Endothelial cell of umbilical vein (primary cell): ENCODE measurements at regions of chr5 and their contacts with region 1.

Region 1: GRCh38 chr5:176660860-176661641 is 13.8 kb downstream of the TSPAN17 start:
- DNase-seq: peak; percentile 69
- H3K4me3 ChIP-seq: no peak overlapping the region
- H3K27ac ChIP-seq: no peak overlapping the region
- H3K4me1 ChIP-seq: no peaks in the 10 kb centered on the region
- H3K27me3 ChIP-seq: peaks cover 0 to 10% of the 10 kb centered on the region in 2 experiments
- CTCF ChIP-seq: peak; percentile 91 to 100
- POLR2A ChIP-seq: no peak

Region 2: DNA sequence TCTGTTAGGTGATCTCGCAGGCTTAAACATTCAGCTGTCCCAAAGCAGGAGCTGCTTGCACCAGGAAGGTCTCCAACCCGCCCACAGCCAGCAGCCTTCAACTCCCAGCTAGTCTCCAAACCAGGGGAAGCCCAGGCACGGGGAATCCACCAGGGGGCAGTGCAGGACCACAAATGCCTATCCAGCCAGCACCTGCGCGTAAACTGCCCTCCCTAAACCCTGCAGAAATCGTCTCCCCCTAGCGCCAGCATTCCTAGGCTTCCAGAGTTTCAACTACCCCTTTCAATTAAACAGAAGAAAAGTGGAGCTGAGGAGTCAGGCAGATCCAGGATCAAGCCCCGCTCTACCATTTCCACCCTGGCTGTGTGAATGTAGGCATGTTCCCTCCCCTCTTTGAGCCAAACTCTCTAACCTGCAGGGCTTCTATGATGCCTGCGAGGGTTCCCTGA is 931.2 kb before region 1 on chr5:
- CTCF ChIA-PET with region 1: interaction called, 10 read pairs
- POLR2A ChIA-PET with region 1: no interaction called
- dilution Hi-C with region 1: no loop called
- intact Hi-C with region 1: loop called (anchors 2 kb)
- DNase-seq: peak; percentile 81
- H3K4me3 ChIP-seq: no peak overlapping the region
- H3K27ac ChIP-seq: no peak overlapping the region
- H3K4me1 ChIP-seq: no peaks in the 10 kb centered on the region
- H3K27me3 ChIP-seq: no peaks in the 10 kb centered on the region
- CTCF ChIP-seq: peak; percentile 90 to 94
- POLR2A ChIP-seq: no peak

Region 3: GRCh38 chr5:176132471-176133288 is 528.4 kb before region 1 on chr5:
- CTCF ChIA-PET with region 1: no interaction called
- POLR2A ChIA-PET with region 1: no interaction called
- dilution Hi-C with region 1: no loop called
- intact Hi-C with region 1: no loop called
- DNase-seq: no peak
- H3K4me3 ChIP-seq: no peak overlapping the region
- H3K27ac ChIP-seq: no peak overlapping the region
- H3K4me1 ChIP-seq: no peaks in the 10 kb centered on the region
- H3K27me3 ChIP-seq: peaks cover 0 to 4% of the 10 kb centered on the region in 2 experiments
- CTCF ChIP-seq: no peak
- POLR2A ChIP-seq: no peak

Region 4: GRCh38 chr5:176671890-176672747 is 11.1 kb after region 1 on chr5:
- CTCF ChIA-PET with region 1: interaction called, 41 read pairs
- POLR2A ChIA-PET with region 1: no interaction called
- dilution Hi-C with region 1: no loop called
- intact Hi-C with region 1: no loop called
- DNase-seq: no peak
- H3K4me3 ChIP-seq: no peak overlapping the region
- H3K27ac ChIP-seq: no peak overlapping the region
- H3K4me1 ChIP-seq: no peaks in the 10 kb centered on the region
- H3K27me3 ChIP-seq: peaks cover 9 to 16% of the 10 kb centered on the region in 2 experiments
- CTCF ChIP-seq: no peak
- POLR2A ChIP-seq: no peak

Region 5: GRCh38 chr5:176744584-176744965 is 83.5 kb after region 1 on chr5:
- CTCF ChIA-PET with region 1: interaction called, 12 read pairs
- POLR2A ChIA-PET with region 1: no interaction called
- dilution Hi-C with region 1: no loop called
- intact Hi-C with region 1: no loop called
- DNase-seq: no peak
- H3K4me3 ChIP-seq: no peak overlapping the region
- H3K27ac ChIP-seq: no peak overlapping the region
- H3K4me1 ChIP-seq: no peaks in the 10 kb centered on the region
- H3K27me3 ChIP-seq: peaks cover 44 to 52% of the 10 kb centered on the region in 2 experiments
- CTCF ChIP-seq: peak; percentile 11 to 12
- POLR2A ChIP-seq: no peak

Region 6: DNA sequence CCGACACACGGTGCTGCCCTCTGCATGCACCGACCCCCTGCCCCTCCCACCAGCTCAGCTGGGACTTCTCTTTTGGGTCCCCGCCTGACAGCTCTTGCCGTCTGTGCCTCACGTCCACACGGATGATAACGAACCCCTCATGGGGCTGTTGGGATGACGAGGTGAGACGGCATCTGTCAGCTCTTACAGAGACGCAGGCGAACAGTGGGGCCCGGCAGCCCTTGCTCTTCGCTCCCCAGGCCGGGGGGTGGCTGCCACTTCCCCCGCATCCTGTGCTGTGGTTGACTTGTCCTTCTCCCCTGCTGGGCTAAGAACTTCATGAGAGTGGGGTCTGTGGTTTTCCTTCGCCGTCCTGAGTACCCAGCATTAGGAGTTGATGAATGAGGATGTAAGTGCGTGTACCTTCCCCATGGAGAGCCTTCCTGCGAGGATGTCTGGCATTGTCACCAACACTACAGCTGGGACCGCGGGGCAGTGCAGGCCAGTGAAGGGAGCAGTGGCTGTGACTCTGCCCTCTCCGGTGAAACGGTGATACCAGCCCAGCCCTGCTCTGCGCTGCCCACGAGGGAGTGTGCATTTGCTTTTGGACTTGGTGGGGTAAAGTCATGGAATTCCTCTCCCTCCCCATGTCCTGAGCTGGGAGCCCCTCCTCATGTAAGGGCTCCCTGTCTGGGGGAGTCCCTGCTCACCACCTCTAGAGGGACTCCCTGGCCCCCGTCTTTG is 214.9 kb after region 1 on chr5:
- CTCF ChIA-PET with region 1: interaction called, 12 read pairs
- POLR2A ChIA-PET with region 1: no interaction called
- dilution Hi-C with region 1: no loop called
- intact Hi-C with region 1: loop called (anchors 10 kb)
- DNase-seq: no peak
- H3K4me3 ChIP-seq: no peak overlapping the region
- H3K27ac ChIP-seq: no peak overlapping the region
- H3K4me1 ChIP-seq: no peaks in the 10 kb centered on the region
- H3K27me3 ChIP-seq: no peaks in the 10 kb centered on the region
- CTCF ChIP-seq: no peak
- POLR2A ChIP-seq: no peak

Region 7: GRCh38 chr5:176941951-176942350 is 280.9 kb after region 1 on chr5:
- CTCF ChIA-PET with region 1: interaction called, 11 read pairs
- POLR2A ChIA-PET with region 1: no interaction called
- dilution Hi-C with region 1: no loop called
- intact Hi-C with region 1: no loop called
- DNase-seq: no peak
- H3K4me3 ChIP-seq: no peak overlapping the region
- H3K27ac ChIP-seq: no peak overlapping the region
- H3K4me1 ChIP-seq: no peaks in the 10 kb centered on the region
- H3K27me3 ChIP-seq: no peaks in the 10 kb centered on the region
- CTCF ChIP-seq: no peak
- POLR2A ChIP-seq: no peak

Region 8: DNA sequence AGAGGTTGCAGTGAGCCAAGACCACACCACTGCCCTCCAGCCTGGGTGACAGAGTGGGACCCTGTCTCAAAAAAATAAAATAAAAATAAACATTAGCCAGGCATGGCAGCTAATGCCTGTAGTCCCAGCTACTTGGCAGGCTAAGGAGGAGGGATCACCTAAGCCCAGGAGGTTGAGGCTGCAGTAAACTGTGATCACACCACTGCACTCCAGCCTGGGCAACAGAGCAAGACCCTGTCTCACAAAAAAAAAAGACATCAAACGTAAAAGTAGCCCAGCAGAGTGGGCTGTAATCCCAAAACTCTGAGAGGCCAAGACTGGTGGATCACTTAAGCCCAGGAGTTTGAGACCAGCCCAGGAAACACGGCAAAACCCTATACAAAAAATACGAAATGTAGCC is 326.5 kb after region 1 on chr5:
- CTCF ChIA-PET with region 1: no interaction called
- POLR2A ChIA-PET with region 1: no interaction called
- dilution Hi-C with region 1: no loop called
- intact Hi-C with region 1: no loop called
- DNase-seq: no peak
- H3K4me3 ChIP-seq: no peak overlapping the region
- H3K27ac ChIP-seq: no peak overlapping the region
- H3K4me1 ChIP-seq: no peaks in the 10 kb centered on the region
- H3K27me3 ChIP-seq: no peaks in the 10 kb centered on the region
- CTCF ChIP-seq: no peak
- POLR2A ChIP-seq: no peak

Region 9: DNA sequence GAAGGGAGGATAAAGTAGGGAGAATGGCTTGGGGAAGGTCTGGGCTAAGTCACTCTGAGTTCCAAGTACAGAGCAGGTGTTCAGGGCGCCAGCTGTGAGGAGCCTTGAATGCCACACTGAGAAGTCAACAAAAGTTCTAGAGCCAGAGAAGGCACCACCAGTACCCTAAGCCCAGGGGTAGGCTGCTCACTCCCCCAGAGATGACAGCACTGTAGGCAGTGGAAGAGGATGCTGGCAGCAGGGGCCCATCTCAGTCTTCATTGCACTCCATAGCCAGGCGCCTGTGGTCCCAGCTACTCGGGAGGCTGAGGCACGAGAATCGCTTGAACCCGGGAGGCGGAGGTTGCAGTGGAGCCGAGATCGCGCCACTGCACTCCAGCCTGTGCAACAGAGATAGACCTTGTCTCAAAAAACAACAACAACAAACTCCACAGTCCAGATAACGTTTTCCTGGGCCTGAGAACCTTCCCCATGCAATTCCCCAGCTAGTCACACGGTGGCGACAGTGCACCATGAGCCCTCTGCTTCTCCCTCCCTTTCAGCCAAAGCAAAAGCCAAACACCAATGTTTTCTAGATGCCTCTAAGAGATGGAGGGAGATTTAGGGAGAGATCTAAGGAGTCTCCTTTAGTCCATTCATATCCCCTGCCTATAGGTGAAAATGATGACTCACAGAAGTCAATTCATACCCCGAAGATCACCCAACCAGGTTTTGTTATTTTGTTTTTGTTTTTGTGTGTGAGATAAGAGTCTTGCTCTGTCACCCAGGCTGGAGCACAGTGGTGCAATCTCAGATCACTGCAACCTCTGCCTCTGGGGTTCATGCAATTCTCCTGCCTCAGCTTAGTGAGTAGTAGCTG is 452.7 kb after region 1 on chr5:
- CTCF ChIA-PET with region 1: interaction called, 113 read pairs
- POLR2A ChIA-PET with region 1: no interaction called
- dilution Hi-C with region 1: no loop called
- intact Hi-C with region 1: loop called (anchors 1 kb)
- DNase-seq: peak; percentile 78
- H3K4me3 ChIP-seq: no peak overlapping the region
- H3K27ac ChIP-seq: no peak overlapping the region
- H3K4me1 ChIP-seq: no peaks in the 10 kb centered on the region
- H3K27me3 ChIP-seq: no peaks in the 10 kb centered on the region
- CTCF ChIP-seq: peak; percentile 96 to 97
- POLR2A ChIP-seq: no peak